Activated CD4-positive, alpha-beta T cell treated with anti-CD3 and anti-CD28 coated beads, Interleukin-2, amount 10 ng/mL, durations not matched to agents 24 days and 14 days (primary cell): ENCODE measurements at regions of chr19 and their contacts with region 1.

Region 1: DNA sequence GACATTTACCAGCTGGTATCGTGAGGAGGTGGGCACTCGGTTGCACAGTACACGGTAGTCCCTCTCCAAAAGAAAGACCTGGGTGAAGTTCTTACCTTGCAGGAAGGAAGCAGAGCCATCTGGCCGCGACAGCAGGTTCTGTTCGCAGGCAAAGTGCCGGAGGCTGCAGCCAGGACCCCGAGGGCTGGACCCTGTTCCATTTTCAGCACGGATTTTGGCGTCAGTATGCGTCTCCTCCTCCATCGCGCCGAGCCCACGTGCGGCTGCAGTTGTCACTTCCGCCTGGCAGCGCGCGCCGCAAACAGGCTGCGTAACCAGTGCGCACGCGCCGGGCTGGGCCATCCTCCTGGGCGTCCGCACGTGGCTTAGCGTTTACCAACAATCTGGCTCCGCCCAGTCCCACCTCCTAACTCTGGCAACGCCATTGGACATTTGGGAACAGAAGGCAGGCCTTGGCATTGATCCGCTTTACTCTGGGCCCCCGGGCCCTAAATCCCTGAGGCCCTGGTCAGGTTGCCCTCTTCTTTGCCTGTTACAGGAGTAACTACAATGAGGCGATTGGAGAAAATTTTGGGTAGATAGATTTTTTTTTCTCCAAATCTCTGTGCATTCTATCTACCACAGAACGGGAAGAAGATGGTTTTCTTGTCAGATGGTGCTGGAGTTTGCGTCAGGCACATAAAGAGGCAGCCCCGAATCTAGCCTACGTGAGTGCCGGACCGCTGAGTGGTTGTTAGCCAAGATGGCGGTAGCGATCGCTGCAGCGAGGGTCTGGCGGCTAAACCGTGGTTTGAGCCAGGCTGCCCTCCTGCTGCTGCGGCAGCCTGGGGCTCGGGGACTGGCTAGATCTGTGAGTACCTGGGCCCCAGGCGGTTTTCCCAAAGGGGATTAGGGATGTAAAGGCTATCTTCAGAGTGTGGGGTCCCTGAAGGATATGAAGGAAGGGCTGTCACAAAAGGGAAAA is at the starts of genes BCKDHA and EXOSC5:
- DNase-seq: peak; percentile 100
- H3K4me3 Mint-ChIP-seq: peak within 1 kb of the TSS; percentile 99
- H3K27ac Mint-ChIP-seq: peak within 1 kb of the TSS; percentile 100
- H3K4me1 Mint-ChIP-seq: peaks cover 39% of the 10 kb centered on the region
- H3K27me3 Mint-ChIP-seq: no peaks in the 10 kb centered on the region
- total RNA-seq, gene BCKDHA: 11.4 and 20.1 TPM in 2 replicates
- total RNA-seq, gene EXOSC5: 65.8 and 69.2 TPM in 2 replicates

Region 2: GRCh38 chr19:40609561-40610395 is 787.6 kb before region 1 on chr19:
- intact Hi-C with region 1: loop called (anchors 5 kb)
- DNase-seq: peak; percentile 97
- H3K4me3 Mint-ChIP-seq: peak overlapping the region; percentile 95
- H3K27ac Mint-ChIP-seq: peak overlapping the region; percentile 97
- H3K4me1 Mint-ChIP-seq: peaks cover 43% of the 10 kb centered on the region
- H3K27me3 Mint-ChIP-seq: no peaks in the 10 kb centered on the region

Region 3: DNA sequence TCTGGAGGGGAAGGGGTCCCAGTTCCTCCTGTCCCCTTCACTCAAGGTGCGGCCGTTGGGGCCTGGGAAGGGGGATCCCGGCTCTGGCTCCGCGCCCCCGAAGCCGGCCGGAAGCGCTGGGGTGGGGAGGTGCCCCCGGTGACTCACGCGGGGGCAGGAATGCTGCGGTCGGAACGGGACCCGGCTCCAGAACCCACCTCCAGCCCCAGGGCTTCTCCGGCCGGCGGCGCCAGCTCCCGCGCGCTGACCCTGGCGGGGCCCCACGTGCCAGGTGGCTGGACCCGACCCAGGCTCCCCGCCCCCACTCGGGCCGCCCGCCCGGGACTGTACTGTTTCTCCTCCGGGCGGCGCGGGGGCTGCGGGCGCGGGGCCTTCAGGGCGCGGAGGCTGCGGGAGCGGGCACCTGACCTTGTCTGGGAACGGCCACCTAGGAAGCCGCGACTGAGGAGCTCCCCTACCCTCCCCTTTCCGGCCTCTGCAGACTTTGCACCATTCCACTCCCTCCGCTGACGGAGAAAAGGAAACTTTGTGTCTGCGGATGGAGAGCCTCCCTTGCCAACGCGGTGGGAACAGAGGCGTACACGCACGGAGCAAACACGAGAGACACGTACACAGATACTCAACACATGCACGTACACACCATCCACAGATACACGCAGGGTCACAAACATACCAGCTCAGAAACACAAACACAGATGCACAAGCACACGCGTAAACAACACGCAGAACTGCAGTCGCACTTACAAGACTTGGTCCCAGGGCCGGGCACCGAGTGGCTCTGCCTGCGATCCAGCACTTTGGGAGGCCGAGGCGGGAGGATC is 171.1 kb before region 1 on chr19:
- intact Hi-C with region 1: no loop called
- DNase-seq: peak; percentile 84
- H3K4me3 Mint-ChIP-seq: peak overlapping the region; percentile 89
- H3K27ac Mint-ChIP-seq: peak overlapping the region; percentile 90
- H3K4me1 Mint-ChIP-seq: peaks cover 23% of the 10 kb centered on the region
- H3K27me3 Mint-ChIP-seq: peaks cover 11% of the 10 kb centered on the region

Region 4: DNA sequence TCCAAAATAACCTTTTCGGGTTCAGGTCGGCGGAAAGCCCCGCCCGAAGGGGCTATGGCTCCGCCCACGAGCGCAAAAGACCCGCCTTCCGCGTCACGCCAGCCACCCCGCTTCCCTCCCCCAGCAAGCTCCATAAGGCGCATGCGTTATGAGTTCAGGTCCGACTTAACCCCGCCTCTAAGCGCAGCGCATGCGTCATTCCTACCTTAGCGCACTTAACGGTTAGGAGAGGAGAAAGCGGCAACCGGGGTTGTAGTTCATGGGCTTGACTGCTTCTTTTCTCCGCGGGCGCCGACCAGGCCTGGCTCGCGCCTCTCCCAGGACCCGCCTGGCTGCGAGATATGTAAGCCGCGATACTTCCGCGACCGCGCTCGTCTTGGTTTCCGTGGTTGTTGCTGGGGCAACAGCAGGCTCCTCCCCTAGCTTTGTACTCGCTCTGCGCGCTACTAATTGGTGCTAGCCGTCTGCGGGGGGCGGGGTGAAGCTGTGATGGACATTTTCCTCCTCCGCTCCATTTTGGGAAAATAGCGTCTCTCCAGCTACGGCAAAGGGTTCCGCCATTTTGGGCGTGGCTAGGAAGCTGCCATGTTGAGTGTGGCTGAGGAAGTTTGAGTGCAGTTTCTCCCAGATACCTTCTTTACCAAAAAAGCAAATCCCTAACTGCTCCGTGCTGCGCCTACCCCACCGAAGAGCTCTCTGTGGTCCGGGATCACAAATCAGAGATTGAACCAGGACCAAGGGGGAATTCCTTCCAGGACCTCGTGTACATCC is 33.4 kb before region 1 on chr19 and contains the start of gene B9D2:
- intact Hi-C with region 1: loop called (anchors 1 kb)
- DNase-seq: peak; percentile 99
- H3K4me3 Mint-ChIP-seq: peak within 1 kb of the TSS; percentile 93
- H3K27ac Mint-ChIP-seq: peak within 1 kb of the TSS; percentile 99
- H3K4me1 Mint-ChIP-seq: peaks cover 28% of the 10 kb centered on the region
- H3K27me3 Mint-ChIP-seq: no peaks in the 10 kb centered on the region
- total RNA-seq, gene B9D2: 6.3 and 8.6 TPM in 2 replicates